Tibial artery (tissue), 4 donors: ENCODE measurements at regions of chrX and their contacts with region 1.

Region 1: GRCh38 chrX:102739651-102740050 is 19.1 kb downstream of the GPRASP3 start:
- DNase-seq: no peak
- H3K4me3 ChIP-seq: no peak overlapping the region
- H3K27ac ChIP-seq: no peak overlapping the region
- H3K4me1 ChIP-seq: no peaks in the 10 kb centered on the region
- H3K27me3 ChIP-seq: no peaks in the 10 kb centered on the region
- CTCF ChIP-seq: no peak

Region 2: DNA sequence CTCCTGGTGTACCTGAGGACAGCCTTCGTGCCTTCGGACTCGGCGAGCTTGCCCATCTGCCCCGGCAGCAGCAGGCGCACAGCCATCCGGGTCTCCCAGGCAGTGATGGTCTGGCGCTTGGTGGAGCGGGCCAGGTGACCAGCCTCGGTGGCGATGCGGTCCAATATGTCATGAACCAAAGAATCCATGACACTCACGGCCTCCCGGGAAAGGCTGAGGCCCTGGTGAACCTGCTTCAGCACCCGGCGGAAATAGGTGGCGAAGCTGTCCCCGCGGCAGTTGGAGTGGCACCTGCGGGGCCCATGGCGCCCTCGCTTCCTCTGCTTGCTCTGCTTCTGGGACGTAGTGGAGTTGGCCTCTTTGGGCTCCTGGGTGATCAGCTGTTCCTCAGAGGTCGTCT is 1273.5 kb after region 1 on chrX:
- intact Hi-C with region 1: loop called (anchors 5 kb)
- DNase-seq: no peak
- H3K4me3 ChIP-seq: no peak overlapping the region
- H3K27ac ChIP-seq: no peak overlapping the region
- H3K4me1 ChIP-seq: no peaks in the 10 kb centered on the region
- H3K27me3 ChIP-seq: no peaks in the 10 kb centered on the region
- CTCF ChIP-seq: no peak